ENCODE measurements at regions of chr11 and their contacts with region 1.

Region 1: DNA sequence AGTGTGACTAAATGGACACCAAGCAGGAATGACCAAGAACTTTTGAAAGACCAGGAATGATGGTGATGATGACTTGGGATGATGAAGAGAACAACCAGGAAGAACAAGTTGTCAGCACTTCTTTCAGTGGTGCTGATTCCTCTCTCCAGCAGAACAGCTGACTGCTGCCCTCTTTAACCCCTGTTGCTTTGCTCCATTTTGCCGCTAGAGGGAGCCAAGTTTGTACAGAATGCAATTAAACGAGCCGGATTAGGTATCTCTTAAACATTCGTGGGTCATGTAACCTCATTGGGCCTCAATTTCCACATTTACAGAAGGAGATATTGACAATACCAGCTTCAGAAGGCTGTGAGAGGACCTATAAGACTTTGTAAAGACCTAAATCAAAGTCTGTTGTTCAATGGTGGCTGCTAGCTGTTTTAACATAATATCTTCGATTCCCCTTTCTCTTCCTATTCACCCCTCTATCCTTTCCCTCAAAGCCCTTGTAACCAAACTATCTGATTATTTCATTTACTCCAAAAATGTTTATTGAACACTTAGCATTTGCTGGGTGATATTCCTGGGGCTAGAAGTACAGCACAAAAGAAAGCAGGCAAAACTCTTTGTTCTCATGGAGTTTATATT is 1.9 kb downstream of the OR4S1 start:
- DNase-seq: peak; percentile 84
- ATAC-seq: peak; percentile 53
- H3K4me3 Mint-ChIP-seq: no peak overlapping the region
- H3K27ac Mint-ChIP-seq: no peak overlapping the region
- H3K4me1 Mint-ChIP-seq: peaks cover 4% of the 10 kb centered on the region
- H3K27me3 Mint-ChIP-seq: peaks cover 8% of the 10 kb centered on the region

Region 2: DNA sequence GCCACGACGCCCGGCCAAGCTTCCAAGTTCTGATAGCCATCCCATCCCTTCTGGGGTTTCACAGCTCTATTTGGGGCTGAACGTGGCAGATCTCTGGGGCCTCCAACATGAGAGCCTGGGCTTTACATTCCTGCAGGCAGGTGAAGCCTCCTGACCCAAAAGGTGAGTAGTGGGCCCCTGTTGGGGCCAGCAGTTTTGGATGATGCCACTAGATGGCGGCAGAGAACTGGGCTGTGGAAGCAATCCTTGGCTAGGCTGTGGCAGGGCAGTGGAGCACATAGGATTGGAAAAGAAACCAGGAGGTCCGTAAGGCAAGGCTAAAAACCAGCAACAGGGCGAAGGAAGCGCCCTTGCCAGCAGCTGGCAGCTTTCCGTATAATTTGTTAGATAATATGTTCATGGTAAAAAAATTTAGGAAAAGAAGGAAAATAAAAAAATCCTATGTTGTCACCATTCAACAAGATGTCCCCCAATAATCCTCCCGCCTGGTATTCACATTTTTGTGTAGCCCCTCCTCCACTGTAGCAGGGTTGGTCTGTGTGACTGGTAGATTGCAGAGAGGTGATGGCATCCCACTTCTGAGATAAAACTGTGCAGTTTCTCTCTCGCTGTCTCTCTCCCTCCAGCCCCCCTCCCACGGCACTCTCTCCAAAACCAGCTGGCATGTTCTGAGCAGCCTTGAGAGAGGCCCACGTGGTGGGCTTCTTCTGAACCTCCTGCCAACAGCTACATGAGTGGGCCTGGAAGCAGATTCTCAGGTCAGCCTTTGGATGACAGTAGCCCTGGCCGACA is 134.9 kb before region 1 on chr11:
- CTCF ChIA-PET with region 1: interaction called, 7 read pairs
- POLR2A ChIA-PET with region 1: no interaction called
- intact Hi-C with region 1: loop called (anchors 5 kb)
- DNase-seq: peak; percentile 80
- ATAC-seq: peak; percentile 87
- H3K4me3 Mint-ChIP-seq: no peak overlapping the region
- H3K27ac Mint-ChIP-seq: no peak overlapping the region
- H3K4me1 Mint-ChIP-seq: peaks cover 23% of the 10 kb centered on the region
- H3K27me3 Mint-ChIP-seq: no peaks in the 10 kb centered on the region

Region 3: DNA sequence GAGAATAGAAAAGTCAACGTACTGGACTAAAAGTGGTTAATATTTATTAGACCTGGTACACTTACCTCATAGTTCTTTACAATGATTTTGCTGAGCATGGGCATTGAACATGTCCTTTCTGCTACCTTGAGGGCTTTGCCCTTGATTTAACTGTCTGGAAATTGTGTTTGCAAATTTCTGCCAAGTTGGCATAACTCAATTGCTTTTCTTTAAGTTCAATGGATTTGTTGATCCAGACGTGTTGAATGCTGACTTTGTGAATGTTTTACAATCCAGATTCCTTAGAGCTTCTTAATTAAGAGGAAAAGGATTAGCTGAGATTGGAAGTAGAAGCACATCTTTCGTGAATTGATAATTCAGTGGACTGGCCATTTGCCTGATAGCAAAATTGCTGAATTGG is 70.1 kb before region 1 on chr11:
- CTCF ChIA-PET with region 1: no interaction called
- POLR2A ChIA-PET with region 1: no interaction called
- intact Hi-C with region 1: no loop called
- DNase-seq: no peak
- ATAC-seq: no peak
- H3K4me3 Mint-ChIP-seq: no peak overlapping the region
- H3K27ac Mint-ChIP-seq: no peak overlapping the region
- H3K4me1 Mint-ChIP-seq: no peaks in the 10 kb centered on the region
- H3K27me3 Mint-ChIP-seq: peaks cover 12% of the 10 kb centered on the region

Region 4: DNA sequence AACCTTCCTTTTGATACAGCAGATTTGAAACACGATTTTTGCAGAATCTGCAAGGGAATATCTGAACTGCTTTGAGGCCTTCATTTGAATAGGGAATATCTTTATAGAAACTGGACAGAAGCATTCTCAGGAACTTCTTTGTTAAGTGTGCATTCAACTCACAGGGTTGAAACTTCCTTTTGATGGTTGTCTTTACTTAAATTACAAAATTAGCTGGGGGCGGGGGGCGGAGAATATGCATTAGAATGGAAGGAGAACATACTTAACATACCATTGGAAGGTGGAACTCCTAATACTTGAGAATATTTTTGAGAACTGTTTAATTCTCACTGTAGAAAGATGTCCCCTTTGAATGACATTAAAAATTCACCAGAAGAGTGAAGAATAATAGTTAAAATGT is 571.4 kb after region 1 on chr11:
- CTCF ChIA-PET with region 1: no interaction called
- POLR2A ChIA-PET with region 1: no interaction called
- intact Hi-C with region 1: loop called in 1 of 2 experiments (anchors 5 kb)
- DNase-seq: no peak
- ATAC-seq: no peak
- H3K4me3 Mint-ChIP-seq: no peak overlapping the region
- H3K27ac Mint-ChIP-seq: no peak overlapping the region
- H3K4me1 Mint-ChIP-seq: no peaks in the 10 kb centered on the region
- H3K27me3 Mint-ChIP-seq: no peaks in the 10 kb centered on the region

Region 5: GRCh38 chr11:49533204-49533603 is 1225.3 kb after region 1 on chr11:
- CTCF ChIA-PET with region 1: no interaction called
- POLR2A ChIA-PET with region 1: no interaction called
- intact Hi-C with region 1: loop called in 1 of 2 experiments (anchors 10 kb)
- DNase-seq: no peak
- ATAC-seq: no peak
- H3K4me3 Mint-ChIP-seq: no peak overlapping the region
- H3K27ac Mint-ChIP-seq: no peak overlapping the region
- H3K4me1 Mint-ChIP-seq: no peaks in the 10 kb centered on the region
- H3K27me3 Mint-ChIP-seq: no peaks in the 10 kb centered on the region

Region 6: DNA sequence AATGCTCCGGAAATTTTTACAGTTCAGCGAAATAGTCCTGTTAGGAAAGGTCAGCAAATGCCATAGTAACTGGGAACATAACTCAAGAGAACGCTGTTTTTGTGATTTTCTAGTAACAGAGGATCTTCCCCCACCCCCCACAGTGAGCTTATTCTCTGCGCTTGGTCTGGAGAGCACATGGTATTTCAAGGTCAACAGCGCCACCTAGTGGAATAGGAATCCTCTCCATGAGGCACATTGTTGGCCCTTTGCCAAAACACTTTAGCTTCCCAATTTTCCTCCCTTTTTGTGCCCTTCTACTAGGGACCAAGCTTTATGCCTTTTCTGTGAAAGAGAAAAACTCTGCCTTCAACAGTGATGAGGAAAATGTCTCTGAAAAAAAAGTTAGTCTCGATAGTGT is 1687.7 kb after region 1 on chr11:
- CTCF ChIA-PET with region 1: interaction called, 4 read pairs
- POLR2A ChIA-PET with region 1: no interaction called
- intact Hi-C with region 1: loop called in 1 of 2 experiments (anchors 2 kb)
- DNase-seq: peak; percentile 65
- ATAC-seq: no peak
- H3K4me3 Mint-ChIP-seq: no peak overlapping the region
- H3K27ac Mint-ChIP-seq: no peak overlapping the region
- H3K4me1 Mint-ChIP-seq: no peaks in the 10 kb centered on the region
- H3K27me3 Mint-ChIP-seq: no peaks in the 10 kb centered on the region